AG04450 (cell line): ENCODE measurements at regions of chr11 and their contacts with region 1.

Region 1: DNA sequence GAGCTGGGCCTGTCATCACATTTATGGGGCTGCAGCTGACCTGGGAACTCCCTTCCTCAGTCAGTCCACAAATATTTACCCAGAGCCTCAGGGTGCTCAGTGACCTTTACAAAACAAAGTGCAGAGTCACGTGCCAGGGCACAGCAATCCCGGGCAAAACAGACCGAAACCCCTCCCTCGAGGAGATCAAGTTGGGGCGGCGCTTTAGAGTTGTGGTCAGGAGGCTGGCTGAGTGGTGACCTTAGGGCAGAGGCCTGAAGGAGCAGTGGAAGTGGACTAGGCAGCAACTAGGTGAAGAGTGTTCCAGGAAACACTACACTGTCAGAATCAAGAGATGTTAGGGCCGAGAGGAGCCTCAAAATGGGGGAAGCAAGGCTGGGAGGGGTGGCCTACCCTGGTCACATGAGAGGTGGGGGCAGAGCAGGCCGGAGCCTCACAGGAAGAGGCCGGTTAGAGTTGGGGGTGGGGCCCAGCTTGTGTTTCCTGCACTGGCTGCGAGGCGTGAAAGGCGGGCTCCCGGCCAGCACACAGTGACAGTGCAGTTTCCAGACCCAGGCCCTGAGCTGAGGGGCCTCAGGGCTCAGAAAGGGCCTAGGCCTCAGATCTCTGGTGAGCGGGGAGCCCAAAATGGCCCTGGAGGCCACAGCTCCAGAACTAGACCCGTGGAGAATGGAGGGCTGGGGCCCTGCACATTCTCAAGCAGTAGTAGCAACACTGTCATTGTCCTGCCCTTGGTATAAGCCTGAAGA is 3.7 kb upstream of the NEAT1 start:
- DNase-seq: no peak
- H3K4me3 ChIP-seq: peak overlapping the region; percentile 46
- H3K27ac ChIP-seq: peak overlapping the region; percentile 100
- H3K27me3 ChIP-seq: no peaks in the 10 kb centered on the region
- CTCF ChIP-seq: no peak

Region 2: GRCh38 chr11:65134386-65135253 is 284.3 kb before region 1 on chr11 and contains the start of gene SYVN1:
- CTCF ChIA-PET with region 1: no interaction called
- POLR2A ChIA-PET with region 1: no interaction called
- DNase-seq: peak; percentile 92
- H3K4me3 ChIP-seq: peak within 1 kb of the TSS; percentile 95
- H3K27ac ChIP-seq: peak within 1 kb of the TSS; percentile 99
- H3K27me3 ChIP-seq: no peaks in the 10 kb centered on the region
- CTCF ChIP-seq: no peak
- polyA plus RNA-seq, gene SYVN1: 18.7 and 27.7 TPM in 2 replicates

Region 3: DNA sequence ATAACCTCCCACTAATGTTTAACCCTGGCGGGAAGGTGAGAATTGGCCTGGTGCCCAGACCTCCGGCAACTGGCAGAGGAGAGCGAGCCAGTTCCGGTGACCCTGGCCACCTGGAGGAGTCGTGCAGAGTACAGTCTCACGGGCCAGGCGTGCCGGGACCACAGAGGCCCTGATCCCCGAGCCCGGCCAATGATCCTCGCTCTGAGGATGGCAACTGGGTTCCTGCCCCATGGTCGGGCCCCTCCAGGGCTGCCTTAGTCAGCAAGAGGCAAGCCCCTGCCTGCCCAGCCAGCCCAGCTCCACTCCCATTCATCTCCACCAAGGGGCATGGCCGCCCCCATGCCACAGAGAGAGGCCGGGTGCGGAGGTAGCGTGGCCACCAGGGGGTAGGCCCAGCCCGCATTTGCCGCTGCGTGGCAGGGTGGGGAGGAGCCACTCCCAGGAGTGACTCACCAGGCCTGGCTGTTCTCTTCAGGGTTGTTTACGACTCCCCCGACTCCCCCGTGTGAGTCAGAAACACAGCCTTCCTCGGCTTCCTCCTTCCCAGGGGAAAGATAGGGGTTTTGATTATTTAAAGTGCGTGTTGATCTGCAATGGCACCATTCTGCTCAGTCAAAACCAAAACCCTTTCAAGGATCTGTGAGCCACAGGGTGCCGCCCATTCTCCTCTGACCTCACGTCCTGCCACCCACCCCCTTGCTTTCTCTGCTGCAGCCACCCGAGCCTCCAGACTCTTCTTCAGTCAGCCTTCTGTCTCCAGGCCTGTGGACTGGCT is 36.7 kb before region 1 on chr11 and contains the start of gene SLC25A45:
- CTCF ChIA-PET with region 1: interaction called, 10 read pairs
- POLR2A ChIA-PET with region 1: interaction called, 50 read pairs
- DNase-seq: peak; percentile 97
- H3K4me3 ChIP-seq: peak within 1 kb of the TSS; percentile 54
- H3K27ac ChIP-seq: peak within 1 kb of the TSS; percentile 99
- H3K27me3 ChIP-seq: no peaks in the 10 kb centered on the region
- CTCF ChIP-seq: peak; percentile 77
- polyA plus RNA-seq, gene SLC25A45: 0.76 and 1.4 TPM in 2 replicates

Region 4: DNA sequence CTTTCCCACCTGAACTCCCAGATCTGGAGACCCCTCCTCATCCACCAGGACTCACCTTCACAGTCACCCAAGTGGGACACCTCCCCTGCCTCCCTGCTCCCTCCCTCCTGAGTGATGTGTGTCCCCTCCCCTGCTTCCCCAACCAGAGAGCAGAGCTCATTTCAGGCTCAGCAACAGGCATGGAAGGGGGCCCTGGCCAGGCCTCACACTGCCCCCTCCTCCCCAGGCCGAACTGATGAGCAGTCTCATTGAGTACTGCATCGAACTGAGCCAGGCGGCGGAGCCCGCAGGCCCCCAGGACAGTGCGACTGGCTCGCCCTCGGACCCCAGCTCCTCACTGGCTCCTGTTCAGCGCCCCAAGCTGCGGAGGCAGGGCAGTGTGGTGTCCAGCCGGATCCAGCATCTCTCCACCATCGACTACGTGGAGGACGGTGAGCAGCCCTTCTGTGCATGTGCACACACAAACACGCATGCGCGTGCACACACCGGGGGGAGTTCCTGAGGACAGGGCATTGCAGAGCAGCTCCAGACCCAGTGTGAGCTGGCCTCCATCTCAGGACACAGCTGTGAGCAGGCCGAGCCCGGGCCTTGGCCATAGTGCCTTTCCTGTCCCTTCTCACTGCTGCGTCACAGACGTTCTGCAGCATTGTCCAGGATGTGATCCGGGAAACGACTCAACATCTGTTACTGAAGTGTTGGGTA is 14.1 kb before region 1 on chr11:
- CTCF ChIA-PET with region 1: interaction called, 18 read pairs
- POLR2A ChIA-PET with region 1: interaction called, 13 read pairs
- DNase-seq: no peak
- H3K4me3 ChIP-seq: no peak overlapping the region
- H3K27ac ChIP-seq: no peak overlapping the region
- H3K27me3 ChIP-seq: no peaks in the 10 kb centered on the region
- CTCF ChIP-seq: no peak

Region 5: DNA sequence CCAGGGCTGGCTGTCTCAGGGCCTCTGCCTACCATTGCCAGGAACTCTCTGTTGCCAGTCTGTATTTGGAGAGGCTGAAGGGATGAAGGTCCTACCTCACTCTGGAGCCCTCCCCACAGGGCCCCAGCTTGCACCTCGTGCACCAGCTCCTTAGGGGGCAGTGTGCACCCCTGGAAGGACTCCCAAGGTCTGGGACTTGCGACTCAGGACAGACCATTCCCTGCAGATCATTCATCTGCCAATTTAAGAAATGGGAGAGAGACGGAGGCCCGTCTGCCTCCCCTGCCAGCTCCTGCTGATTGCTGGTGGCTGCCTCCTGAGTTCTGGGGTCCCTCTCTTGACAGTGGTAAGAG is 52.5 kb after region 1 on chr11:
- CTCF ChIA-PET with region 1: interaction called, 5 read pairs
- POLR2A ChIA-PET with region 1: interaction called, 82 read pairs
- DNase-seq: no peak
- H3K4me3 ChIP-seq: peak overlapping the region; percentile 31
- H3K27ac ChIP-seq: peak overlapping the region; percentile 97
- H3K27me3 ChIP-seq: no peaks in the 10 kb centered on the region
- CTCF ChIP-seq: peak; percentile 56

Region 6: DNA sequence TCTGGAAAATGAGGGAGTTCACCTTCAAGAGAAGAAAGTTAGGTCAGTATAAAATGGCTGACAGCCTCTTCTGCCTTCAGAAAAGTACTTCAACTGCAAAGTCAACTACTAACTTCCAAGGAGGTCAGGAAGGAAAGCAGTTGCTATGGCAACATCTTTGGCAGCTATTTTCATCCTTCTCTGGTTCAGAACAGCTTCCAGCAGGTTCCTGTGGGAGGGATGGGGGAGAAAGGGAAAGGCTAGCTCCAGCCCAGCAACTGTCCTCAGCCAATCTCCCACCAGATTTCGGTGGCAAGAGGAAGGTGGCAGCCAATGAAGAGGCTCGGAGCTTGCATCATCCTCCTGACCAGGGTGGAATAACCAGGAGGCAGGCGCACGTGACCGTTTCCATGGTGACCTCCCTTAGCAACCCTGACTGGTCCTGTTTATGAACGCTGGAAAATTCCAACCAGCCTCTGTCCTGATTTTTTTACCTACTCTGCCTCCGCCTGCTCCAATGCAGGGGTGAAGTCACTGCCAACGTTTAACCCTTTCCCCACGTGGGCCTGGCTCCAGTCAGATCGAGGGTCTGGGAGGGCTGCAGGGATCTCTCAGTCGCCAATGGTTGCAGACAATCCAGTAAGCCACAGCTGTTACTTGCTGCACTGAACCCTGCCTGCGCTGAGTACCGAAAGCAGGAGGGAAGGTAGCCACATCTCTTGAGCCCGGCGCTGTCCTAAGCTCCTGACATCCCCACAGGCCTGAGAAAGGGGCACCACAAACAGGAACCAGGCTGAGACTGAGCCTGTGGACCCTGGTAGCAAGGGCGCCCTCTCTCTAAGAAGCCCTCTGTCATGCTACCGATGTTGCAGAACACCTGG is 68.8 kb after region 1 on chr11:
- CTCF ChIA-PET with region 1: interaction called, 8 read pairs
- POLR2A ChIA-PET with region 1: interaction called, 999 read pairs
- DNase-seq: peak; percentile 100
- H3K4me3 ChIP-seq: peak overlapping the region; percentile 45
- H3K27ac ChIP-seq: peak overlapping the region; percentile 99
- H3K27me3 ChIP-seq: no peaks in the 10 kb centered on the region
- CTCF ChIP-seq: no peak

Region 7: GRCh38 chr11:65506770-65507505 is 88.1 kb after region 1 on chr11:
- CTCF ChIA-PET with region 1: interaction called, 49 read pairs
- POLR2A ChIA-PET with region 1: interaction called, 999 read pairs
- DNase-seq: peak; percentile 82
- H3K4me3 ChIP-seq: peak overlapping the region; percentile 97
- H3K27ac ChIP-seq: peak overlapping the region; percentile 89
- H3K27me3 ChIP-seq: no peaks in the 10 kb centered on the region
- CTCF ChIP-seq: no peak